MCF 10A (cell line): ENCODE measurements at regions of chr1 and their contacts with region 1.

Region 1: DNA sequence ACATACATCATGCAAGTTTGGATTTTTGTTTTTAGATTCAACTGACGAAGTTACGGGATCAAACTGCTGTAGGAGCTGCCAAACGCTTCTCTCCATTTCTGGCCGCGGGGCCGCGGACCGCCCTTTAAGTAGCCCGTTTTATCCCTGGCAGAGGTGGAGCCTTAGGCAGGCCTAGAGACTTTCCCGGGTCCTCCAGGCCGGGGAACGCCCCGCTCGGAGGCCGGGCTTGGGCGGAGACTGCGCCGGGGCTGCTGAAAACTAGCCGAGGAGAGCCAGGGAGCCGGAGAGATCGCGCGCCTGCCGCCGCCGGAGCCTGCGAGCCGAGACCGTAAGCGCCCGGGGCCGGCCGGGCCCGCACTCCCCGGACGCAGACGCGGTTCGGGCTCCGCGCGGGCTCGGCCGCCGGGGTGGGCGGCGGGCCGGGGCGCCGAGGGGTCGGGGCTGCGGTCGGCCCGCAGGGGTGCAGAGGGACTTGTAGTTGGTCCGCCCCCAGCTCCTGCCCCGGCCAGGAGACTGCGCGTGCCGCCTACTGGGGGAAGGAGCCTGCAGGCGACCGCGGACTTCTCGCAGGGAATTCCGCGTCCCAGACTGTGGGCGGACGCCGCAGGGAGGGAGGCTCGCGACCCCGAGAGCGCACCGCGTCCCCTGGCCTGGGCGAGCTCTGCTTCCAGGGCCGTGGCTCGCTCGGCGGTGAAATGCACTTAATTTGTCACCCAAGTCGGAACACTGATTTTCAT is at the start of gene EPHX1:
- DNase-seq: peak; percentile 97
- H3K4me3 Mint-ChIP-seq: peak within 1 kb of the TSS; percentile 92
- H3K27ac Mint-ChIP-seq: peak within 1 kb of the TSS; percentile 82
- H3K4me1 Mint-ChIP-seq: peaks cover 25% of the 10 kb centered on the region
- H3K27me3 Mint-ChIP-seq: no peaks in the 10 kb centered on the region
- CTCF ChIP-seq: peak; percentile 35
- total RNA-seq, gene EPHX1: 25.0 and 35.8 TPM in 2 replicates

Region 2: GRCh38 chr1:225508538-225509375 is 301.3 kb before region 1 on chr1:
- CTCF ChIA-PET with region 1: interaction called, 3 read pairs
- POLR2A ChIA-PET with region 1: interaction called, 16 read pairs
- intact Hi-C with region 1: no loop called
- DNase-seq: peak; percentile 99
- H3K4me3 Mint-ChIP-seq: no peak overlapping the region
- H3K27ac Mint-ChIP-seq: peak overlapping the region; percentile 83
- H3K4me1 Mint-ChIP-seq: peaks cover 32% of the 10 kb centered on the region
- H3K27me3 Mint-ChIP-seq: no peaks in the 10 kb centered on the region
- CTCF ChIP-seq: no peak

Region 3: GRCh38 chr1:225666495-225666894 is 143.5 kb before region 1 on chr1:
- CTCF ChIA-PET with region 1: no interaction called
- POLR2A ChIA-PET with region 1: no interaction called
- intact Hi-C with region 1: no loop called
- DNase-seq: no peak
- H3K4me3 Mint-ChIP-seq: no peak overlapping the region
- H3K27ac Mint-ChIP-seq: no peak overlapping the region
- H3K4me1 Mint-ChIP-seq: peaks cover 13% of the 10 kb centered on the region
- H3K27me3 Mint-ChIP-seq: no peaks in the 10 kb centered on the region
- CTCF ChIP-seq: no peak

Region 4: GRCh38 chr1:225834417-225835329 is 24.7 kb after region 1 on chr1:
- CTCF ChIA-PET with region 1: interaction called, 13 read pairs
- POLR2A ChIA-PET with region 1: interaction called, 5 read pairs
- intact Hi-C with region 1: no loop called
- DNase-seq: peak; percentile 87
- H3K4me3 Mint-ChIP-seq: no peak overlapping the region
- H3K27ac Mint-ChIP-seq: peak overlapping the region; percentile 63
- H3K4me1 Mint-ChIP-seq: peaks cover 9% of the 10 kb centered on the region
- H3K27me3 Mint-ChIP-seq: no peaks in the 10 kb centered on the region
- CTCF ChIP-seq: no peak

Region 5: DNA sequence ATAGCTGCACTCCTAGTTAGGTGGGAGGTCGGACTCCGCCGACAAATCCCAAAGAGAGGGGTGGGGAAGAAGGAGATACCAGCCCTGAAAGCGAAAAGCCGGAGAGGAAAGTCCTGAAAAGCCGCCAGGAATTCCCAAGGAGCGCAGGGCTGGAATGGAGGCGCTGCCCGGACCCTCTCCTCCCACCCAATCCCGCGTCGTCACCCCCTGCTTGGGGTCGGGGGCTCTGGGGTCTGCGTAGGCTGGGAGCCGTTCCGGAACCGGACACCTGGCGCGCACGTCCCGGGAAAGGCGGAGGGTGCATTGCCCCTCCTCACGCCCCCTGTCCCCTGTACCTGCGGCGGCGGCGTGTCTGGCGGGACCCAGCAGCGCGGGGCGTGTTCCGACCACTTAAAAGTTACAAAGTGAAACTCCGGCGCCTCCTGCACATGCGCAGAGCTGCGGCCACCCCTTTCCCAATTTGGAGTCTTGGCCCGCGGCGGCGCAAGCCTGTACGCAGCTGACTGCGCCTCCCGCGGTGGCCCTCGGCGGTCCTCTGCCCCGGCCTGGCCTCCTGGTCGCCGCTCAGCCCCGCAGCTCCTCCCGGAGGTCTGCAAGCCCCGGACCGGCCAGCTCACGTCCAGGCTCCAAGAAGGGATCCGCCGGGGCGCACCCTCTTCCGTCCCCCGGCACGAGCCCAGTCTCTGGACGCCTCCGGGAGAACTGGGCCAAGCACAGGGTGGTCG is 72.1 kb after region 1 on chr1 and contains the start of gene TMEM63A:
- CTCF ChIA-PET with region 1: interaction called, 43 read pairs
- POLR2A ChIA-PET with region 1: interaction called, 34 read pairs
- intact Hi-C with region 1: loop called (anchors 2 kb)
- DNase-seq: peak; percentile 92
- H3K4me3 Mint-ChIP-seq: peak within 1 kb of the TSS; percentile 91
- H3K27ac Mint-ChIP-seq: peak within 1 kb of the TSS; percentile 82
- H3K4me1 Mint-ChIP-seq: peaks cover 51% of the 10 kb centered on the region
- H3K27me3 Mint-ChIP-seq: no peaks in the 10 kb centered on the region
- CTCF ChIP-seq: peak; percentile 25
- total RNA-seq, gene TMEM63A: 52.1 and 71.2 TPM in 2 replicates

Region 6: DNA sequence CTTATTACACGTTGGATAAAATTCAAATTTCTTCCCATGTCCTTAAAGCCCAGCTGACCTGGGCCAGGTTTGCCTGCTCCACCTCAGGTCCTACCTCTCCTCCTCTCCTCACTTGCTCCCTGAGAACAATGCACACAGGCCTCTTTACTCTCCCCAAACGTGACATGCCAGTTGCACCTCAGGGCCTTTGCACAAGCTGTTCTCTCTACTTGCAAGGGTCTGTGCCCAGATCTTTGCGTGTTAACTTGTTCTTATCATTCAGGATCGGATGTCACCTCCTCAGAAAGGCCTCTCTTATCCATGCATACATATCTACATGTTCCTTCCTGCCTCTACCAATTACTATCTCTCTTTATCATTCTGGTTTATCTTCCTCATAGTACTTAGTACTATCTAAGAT is 93.6 kb after region 1 on chr1:
- CTCF ChIA-PET with region 1: no interaction called
- POLR2A ChIA-PET with region 1: no interaction called
- intact Hi-C with region 1: no loop called
- DNase-seq: no peak
- H3K4me3 Mint-ChIP-seq: no peak overlapping the region
- H3K27ac Mint-ChIP-seq: no peak overlapping the region
- H3K4me1 Mint-ChIP-seq: no peaks in the 10 kb centered on the region
- H3K27me3 Mint-ChIP-seq: no peaks in the 10 kb centered on the region
- CTCF ChIP-seq: no peak

Region 7: DNA sequence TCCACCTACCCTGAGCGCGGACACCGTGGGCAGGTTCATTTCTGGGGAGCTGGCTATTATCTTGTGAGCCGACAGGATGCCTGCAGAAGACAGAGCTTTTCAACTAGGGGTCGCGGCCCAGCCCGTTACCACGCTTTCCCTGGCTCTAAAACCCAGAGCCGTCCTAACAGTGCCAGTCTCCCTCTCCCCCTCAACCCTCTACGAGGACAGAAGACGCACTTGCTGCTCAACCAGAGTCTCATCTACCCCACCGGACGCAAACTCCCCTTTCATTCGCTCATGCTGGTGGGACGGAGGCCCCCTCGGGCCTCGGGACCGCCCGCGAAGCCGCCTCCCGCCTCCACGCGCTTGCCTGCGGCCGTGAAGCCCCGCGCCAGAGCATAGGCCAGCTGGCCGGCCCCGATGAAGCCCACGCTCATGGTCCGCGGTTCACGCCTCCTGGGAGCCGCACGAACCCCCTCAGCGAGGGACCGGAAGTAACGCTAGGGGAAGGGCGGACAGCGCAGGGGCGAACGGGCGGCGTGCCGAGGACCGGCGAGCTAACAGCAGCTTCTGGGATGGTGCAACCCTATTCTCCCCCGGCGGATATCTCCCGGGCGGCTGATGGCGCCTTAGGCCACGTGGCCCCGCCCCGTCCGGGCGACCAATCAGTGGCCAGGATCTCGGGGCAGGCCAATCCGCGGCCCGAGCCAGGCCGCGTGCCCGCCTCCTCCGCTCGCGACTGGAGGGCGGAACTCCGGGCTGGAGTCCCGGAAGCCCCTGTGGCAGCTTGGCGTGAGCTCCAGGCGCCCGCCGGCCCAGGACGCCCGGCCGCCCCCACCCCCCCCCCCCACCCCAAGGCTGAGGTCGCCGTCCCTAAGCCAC is 113.9 kb after region 1 on chr1 and contains the start of gene PYCR2:
- CTCF ChIA-PET with region 1: interaction called, 7 read pairs
- POLR2A ChIA-PET with region 1: interaction called, 38 read pairs
- intact Hi-C with region 1: no loop called
- DNase-seq: peak; percentile 99
- H3K4me3 Mint-ChIP-seq: peak within 1 kb of the TSS; percentile 99
- H3K27ac Mint-ChIP-seq: peak within 1 kb of the TSS; percentile 95
- H3K4me1 Mint-ChIP-seq: peaks cover 42% of the 10 kb centered on the region
- H3K27me3 Mint-ChIP-seq: no peaks in the 10 kb centered on the region
- CTCF ChIP-seq: no peak
- total RNA-seq, gene PYCR2: 172 and 173 TPM in 2 replicates

Region 8: DNA sequence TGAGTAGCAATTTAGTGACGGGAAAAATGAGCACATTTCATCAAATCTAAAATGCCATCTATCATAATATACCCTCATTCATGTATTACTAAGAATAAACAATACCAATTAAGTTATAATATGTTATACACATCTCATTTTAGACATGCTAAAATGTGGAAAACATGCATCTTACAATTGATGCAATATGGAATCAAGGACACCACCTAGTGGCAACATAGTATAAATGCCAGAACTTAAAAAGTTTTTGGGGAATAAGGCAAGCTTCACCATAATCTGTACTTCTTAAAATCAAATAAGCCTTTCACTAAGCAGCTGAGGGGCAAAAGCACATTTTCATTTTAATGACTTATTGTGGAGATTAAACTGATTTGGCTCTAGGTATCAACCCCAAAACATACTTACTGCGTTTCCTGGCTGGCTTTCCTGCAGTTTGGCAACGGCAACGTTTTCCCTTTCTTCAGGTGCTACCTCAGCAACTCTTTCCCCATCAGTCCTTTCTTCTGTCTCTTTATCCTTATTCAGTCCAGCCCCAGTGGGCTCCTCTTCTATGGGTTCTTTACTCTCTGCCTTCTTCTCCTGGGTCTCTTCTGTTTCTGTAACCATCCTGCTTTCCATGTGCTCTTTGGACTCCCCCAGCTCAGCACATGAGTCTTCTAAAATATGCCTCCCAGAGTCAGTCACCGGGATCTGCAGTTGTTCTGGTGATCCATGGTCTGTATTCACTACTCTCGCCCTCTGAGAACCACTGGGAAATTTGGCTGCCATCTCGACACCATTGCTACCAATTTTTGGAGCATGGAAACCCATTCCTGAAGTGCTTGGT is 177.7 kb after region 1 on chr1:
- CTCF ChIA-PET with region 1: interaction called, 18 read pairs
- POLR2A ChIA-PET with region 1: no interaction called
- intact Hi-C with region 1: no loop called
- DNase-seq: peak; percentile 77
- H3K4me3 Mint-ChIP-seq: no peak overlapping the region
- H3K27ac Mint-ChIP-seq: no peak overlapping the region
- H3K4me1 Mint-ChIP-seq: peaks cover 6% of the 10 kb centered on the region
- H3K27me3 Mint-ChIP-seq: no peaks in the 10 kb centered on the region
- CTCF ChIP-seq: peak; percentile 89